Activated naive CD4-positive, alpha-beta T cell treated with anti-CD3 and anti-CD28 coated beads for 36 hours (primary cell): ENCODE measurements at regions of chr18 and their contacts with region 1.

Region 1: DNA sequence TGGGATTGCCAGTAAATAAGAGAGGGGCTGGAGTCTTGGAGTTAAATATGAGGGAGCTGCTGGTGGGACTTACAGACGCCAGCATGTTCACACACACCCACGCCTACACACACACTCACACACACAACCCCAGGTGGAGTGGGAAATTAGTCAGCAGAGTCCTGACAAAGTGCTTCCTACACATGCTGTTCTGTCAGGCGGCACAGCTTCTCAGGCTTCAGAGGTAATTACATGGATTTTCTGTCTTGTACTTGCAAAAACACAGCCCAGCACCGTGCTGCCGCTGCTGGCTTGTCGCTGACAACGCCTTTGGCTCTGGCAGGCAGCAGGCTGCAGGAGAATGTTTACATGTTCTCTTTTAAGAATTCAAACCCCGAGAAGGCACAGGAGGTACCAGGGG is 1186.3 kb upstream of the CELF4 start:
- DNase-seq: no peak
- H3K4me3 Mint-ChIP-seq: no peak overlapping the region
- H3K27ac Mint-ChIP-seq: no peak overlapping the region
- H3K4me1 Mint-ChIP-seq: peaks cover 11% of the 10 kb centered on the region
- H3K27me3 Mint-ChIP-seq: peaks cover 4% of the 10 kb centered on the region

Region 2: DNA sequence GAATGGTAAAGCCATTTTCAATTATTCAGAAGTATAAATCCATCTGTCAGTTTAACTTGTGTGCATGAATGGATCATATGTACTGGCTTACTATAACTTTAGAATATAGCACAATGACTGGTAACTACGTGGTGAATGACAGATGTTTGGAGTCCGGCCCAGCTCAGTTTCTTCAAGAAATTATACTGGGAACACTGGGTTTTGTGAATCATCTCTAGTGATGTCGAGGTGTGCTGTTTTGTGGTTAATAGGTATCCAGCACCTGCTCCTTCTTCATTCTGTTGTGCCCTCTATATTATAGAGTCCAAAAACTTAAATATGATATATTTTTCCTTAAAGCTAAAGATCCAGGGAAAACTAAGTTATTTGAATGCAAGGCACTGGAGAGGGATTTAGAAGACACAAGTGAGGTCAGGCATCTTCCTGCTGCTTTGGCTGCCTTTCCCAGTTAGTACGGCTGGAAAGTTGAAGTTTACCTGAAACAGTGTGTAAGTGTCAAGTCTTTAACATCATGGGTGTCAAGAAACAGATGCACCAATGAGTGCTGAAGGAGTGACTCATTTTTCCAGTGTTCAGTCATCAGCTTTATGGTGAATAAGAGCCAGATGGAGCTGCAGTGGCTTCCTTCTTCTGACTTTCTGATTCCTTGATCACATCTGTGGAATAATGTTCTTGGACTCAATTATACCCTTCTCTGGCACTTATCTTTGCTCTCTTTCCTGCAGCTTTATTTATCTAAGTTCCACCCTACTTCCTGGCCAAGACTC is 106.8 kb before region 1 on chr18:
- CTCF ChIA-PET with region 1: no interaction called
- intact Hi-C with region 1: loop called (anchors 5 kb)
- DNase-seq: peak; percentile 14
- H3K4me3 Mint-ChIP-seq: no peak overlapping the region
- H3K27ac Mint-ChIP-seq: no peak overlapping the region
- H3K4me1 Mint-ChIP-seq: peaks cover 6% of the 10 kb centered on the region
- H3K27me3 Mint-ChIP-seq: peaks cover 2% of the 10 kb centered on the region